Dorsolateral prefrontal cortex (tissue), 120 donors: ENCODE measurements at regions of chr1 and their contacts with region 1.

Region 1: DNA sequence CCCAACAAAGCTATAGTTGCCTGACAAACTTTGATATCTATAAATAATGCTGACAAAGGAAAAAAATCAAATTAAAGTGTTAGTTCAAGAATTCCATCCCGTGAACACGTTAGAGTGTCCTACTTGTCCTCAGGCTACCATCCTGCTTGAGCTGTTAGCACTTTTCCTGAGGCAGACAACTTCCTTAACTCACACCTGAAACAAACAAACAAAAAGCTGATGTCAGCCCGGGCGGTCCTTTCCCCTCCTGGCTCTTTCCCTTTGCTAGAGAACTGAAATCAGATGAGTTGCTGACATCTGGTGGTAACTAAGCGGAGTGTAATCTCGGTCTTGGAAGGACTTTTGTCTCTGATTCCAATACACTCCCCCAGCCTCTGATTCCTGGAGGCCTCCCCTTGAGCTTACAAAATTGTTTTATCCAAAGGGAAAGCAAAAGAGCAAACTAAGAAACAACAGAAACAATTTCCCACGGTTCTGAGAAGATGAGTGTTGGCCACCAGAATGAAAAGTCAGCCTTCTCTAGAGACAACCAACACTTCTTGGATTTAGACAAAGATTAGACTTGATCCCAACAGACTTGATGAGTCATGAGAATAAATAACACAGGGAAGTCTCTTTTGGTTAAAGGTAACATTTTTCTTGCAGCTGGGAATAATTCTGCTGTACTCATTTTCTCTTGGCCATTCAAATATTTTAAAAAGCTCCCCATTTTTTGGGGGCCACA is 135.4 kb downstream of the PROX1 start:
- DNase-seq: peak in 6 of 10 donors; percentile 27 to 67 (median 50)
- H3K4me3 ChIP-seq: peak overlapping the region in 15 of 59 donors; percentile 8 to 57 (median 31)
- H3K27ac ChIP-seq: peak overlapping the region in 1 of 59 donors; percentile 43
- H3K27me3 ChIP-seq: peaks cover 0 to under 1% (median 0%) of the 10 kb centered on the region in 45 donors
- CTCF ChIP-seq: peak in 55 of 56 donors; percentile 55 to 94 (median 79)

Region 2: GRCh38 chr1:213244664-213245091 is 878.5 kb before region 1 on chr1:
- intact Hi-C with region 1: loop called (anchors 5 to 10 kb)
- DNase-seq: peak in 1 of 10 donors; percentile 49
- H3K4me3 ChIP-seq: no peak overlapping the region
- H3K27ac ChIP-seq: no peak overlapping the region
- H3K27me3 ChIP-seq: no peaks in the 10 kb centered on the region
- CTCF ChIP-seq: peak; percentile 72 to 96 (median 86)

Region 3: DNA sequence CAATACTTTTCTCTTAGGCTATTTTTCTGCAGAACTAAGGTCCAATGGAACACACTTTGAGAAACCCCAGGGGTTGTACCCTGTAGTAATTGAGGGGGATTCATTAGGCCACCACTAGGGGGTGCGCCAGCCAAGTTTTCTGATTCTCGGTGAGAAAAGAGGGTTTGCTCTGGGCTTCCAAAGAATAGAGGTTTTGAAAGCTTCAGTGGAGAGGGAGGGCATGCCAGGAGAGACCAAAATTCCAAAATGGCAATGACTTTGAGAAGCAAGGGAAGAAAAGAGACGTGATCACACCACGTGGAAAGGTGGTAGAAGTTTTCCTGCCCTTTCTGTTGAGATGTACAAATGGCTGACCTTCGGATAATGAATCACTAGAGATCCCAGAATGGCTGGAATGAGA is 748.9 kb before region 1 on chr1:
- intact Hi-C with region 1: loop called (anchors 2 to 10 kb)
- DNase-seq: peak in 9 of 10 donors; percentile 50 to 77 (median 68)
- H3K4me3 ChIP-seq: no peak overlapping the region
- H3K27ac ChIP-seq: no peak overlapping the region
- H3K27me3 ChIP-seq: no peaks in the 10 kb centered on the region
- CTCF ChIP-seq: peak; percentile 76 to 95 (median 86)

Region 4: GRCh38 chr1:213568929-213569815 is 554.1 kb before region 1 on chr1:
- intact Hi-C with region 1: loop called in 1 of 2 experiments (anchors 5 kb)
- DNase-seq: no peak
- H3K4me3 ChIP-seq: no peak overlapping the region
- H3K27ac ChIP-seq: no peak overlapping the region
- H3K27me3 ChIP-seq: no peaks in the 10 kb centered on the region
- CTCF ChIP-seq: no peak

Region 5: GRCh38 chr1:213982672-213983492 is 140.3 kb before region 1 on chr1:
- intact Hi-C with region 1: loop called (anchors 2 to 10 kb)
- DNase-seq: peak in 3 of 10 donors; percentile 47 to 69 (median 64)
- H3K4me3 ChIP-seq: peak overlapping the region; percentile 29 to 79 (median 63)
- H3K27ac ChIP-seq: peak overlapping the region in 53 of 59 donors; percentile 23 to 84 (median 69)
- H3K27me3 ChIP-seq: peaks cover 0 to 95% (median 60%) of the 10 kb centered on the region in 45 donors
- CTCF ChIP-seq: peak in 41 of 56 donors; percentile 8 to 66 (median 29)

Region 6: DNA sequence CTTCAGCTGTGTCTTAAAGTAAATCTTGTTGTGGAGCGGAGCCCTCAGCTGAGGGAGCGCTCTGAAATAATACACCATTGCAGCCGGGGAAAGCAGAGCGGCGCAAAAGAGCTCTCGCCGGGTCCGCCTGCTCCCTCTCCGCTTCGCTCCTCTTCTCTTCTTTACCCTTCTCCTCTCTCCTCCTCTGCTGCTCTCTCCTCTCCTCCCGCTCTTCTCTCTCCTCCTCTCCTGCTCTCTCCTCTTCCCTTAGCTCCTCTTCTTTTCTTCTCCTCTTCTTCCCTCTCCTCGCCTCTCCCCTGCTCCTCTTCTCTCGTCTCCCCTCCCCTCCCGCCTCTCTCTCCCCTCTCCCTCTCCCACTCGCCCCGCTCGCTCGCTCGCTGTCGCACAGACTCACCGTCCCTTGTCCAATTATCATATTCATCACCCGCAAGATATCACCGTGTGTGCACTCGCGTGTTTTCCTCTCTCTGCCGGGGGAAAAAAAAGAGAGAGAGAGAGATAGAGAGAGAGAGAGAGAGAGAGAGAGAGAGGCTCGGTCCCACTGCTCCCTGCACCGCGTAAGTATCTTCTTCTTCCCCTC is 135.2 kb before region 1 on chr1 and contains the start of gene PROX1:
- intact Hi-C with region 1: loop called (anchors 2 to 10 kb)
- DNase-seq: peak in 1 of 10 donors; percentile 86
- H3K4me3 ChIP-seq: peak within 1 kb of the TSS; percentile 45 to 87 (median 67)
- H3K27ac ChIP-seq: peak within 1 kb of the TSS in 58 of 59 donors; percentile 50 to 96 (median 87)
- H3K27me3 ChIP-seq: peaks cover 0 to 76% (median 39%) of the 10 kb centered on the region in 45 donors
- CTCF ChIP-seq: peak in 10 of 56 donors; percentile 0 to 31 (median 22)
- total RNA-seq, gene PROX1: 15.7 to 146 (median 33.4) TPM

Region 7: GRCh38 chr1:214281720-214282629 is 158.8 kb after region 1 on chr1:
- intact Hi-C with region 1: no loop called
- DNase-seq: peak in 2 of 10 donors; percentile 11 to 16
- H3K4me3 ChIP-seq: peak overlapping the region; percentile 47 to 92 (median 83)
- H3K27ac ChIP-seq: peak overlapping the region in 47 of 59 donors; percentile 3 to 92 (median 83)
- H3K27me3 ChIP-seq: no peaks in the 10 kb centered on the region
- CTCF ChIP-seq: no peak

Region 8: GRCh38 chr1:214494706-214495105 is 371.5 kb after region 1 on chr1:
- intact Hi-C with region 1: no loop called
- DNase-seq: no peak
- H3K4me3 ChIP-seq: no peak overlapping the region
- H3K27ac ChIP-seq: no peak overlapping the region
- H3K27me3 ChIP-seq: no peaks in the 10 kb centered on the region
- CTCF ChIP-seq: no peak